B cell (primary cell): ENCODE measurements at regions of chr12 and their contacts with region 1.

Region 1: GRCh38 chr12:96516472-96517430 is 27.4 kb downstream of the CFAP54 start:
- DNase-seq: peak; percentile 87
- ATAC-seq: peak; percentile 65
- H3K4me3 ChIP-seq: peak overlapping the region in 1 of 5 experiments; percentile 22
- H3K4me3 Mint-ChIP-seq: no peak overlapping the region
- H3K27ac ChIP-seq: no peak overlapping the region
- H3K27ac Mint-ChIP-seq: no peak overlapping the region
- H3K4me1 ChIP-seq: peaks cover 14 to 16% of the 10 kb centered on the region in 2 donors
- H3K4me1 Mint-ChIP-seq: peaks cover 21% of the 10 kb centered on the region
- H3K27me3 ChIP-seq: no peaks in the 10 kb centered on the region
- H3K27me3 Mint-ChIP-seq: no peaks in the 10 kb centered on the region
- CTCF ChIP-seq: peak; percentile 84

Region 2: DNA sequence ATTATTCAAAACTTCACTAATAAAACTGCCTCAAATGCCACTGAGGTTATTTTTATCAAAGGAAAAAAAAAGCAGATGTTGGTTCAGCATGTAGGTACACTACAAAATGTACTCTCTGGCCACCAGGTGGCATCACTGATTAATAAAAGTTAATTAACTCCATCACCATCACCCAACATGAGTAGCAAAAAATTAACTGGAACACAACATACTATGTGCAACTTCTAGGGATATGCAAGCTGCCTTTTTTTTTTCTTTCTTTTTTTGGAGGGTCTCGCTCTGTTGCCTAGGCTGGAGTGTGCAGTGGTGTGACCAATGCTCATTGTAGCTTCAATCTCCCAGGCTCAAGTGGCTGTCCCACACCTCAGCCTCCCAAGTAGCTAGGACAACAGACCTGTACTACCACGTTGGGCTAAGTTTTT is 1399.6 kb before region 1 on chr12:
- CTCF ChIA-PET with region 1: interaction called, 9 read pairs
- POLR2A ChIA-PET with region 1: no interaction called
- intact Hi-C with region 1: loop called (anchors 2 kb)
- DNase-seq: peak; percentile 79
- ATAC-seq: peak; percentile 76
- H3K4me3 ChIP-seq: no peak overlapping the region
- H3K4me3 Mint-ChIP-seq: no peak overlapping the region
- H3K27ac ChIP-seq: no peak overlapping the region
- H3K27ac Mint-ChIP-seq: no peak overlapping the region
- H3K4me1 ChIP-seq: no peaks in the 10 kb centered on the region
- H3K4me1 Mint-ChIP-seq: no peaks in the 10 kb centered on the region
- H3K27me3 ChIP-seq: no peaks in the 10 kb centered on the region
- H3K27me3 Mint-ChIP-seq: no peaks in the 10 kb centered on the region
- CTCF ChIP-seq: peak; percentile 81

Region 3: GRCh38 chr12:96061864-96062453 is 454.8 kb before region 1 on chr12:
- CTCF ChIA-PET with region 1: interaction called, 69 read pairs
- POLR2A ChIA-PET with region 1: no interaction called
- intact Hi-C with region 1: loop called (anchors 1 kb)
- DNase-seq: peak; percentile 91
- ATAC-seq: peak; percentile 97
- H3K4me3 ChIP-seq: peak overlapping the region in 1 of 5 experiments; percentile 38
- H3K4me3 Mint-ChIP-seq: peak overlapping the region; percentile 36
- H3K27ac ChIP-seq: peak overlapping the region; percentile 9 to 43
- H3K27ac Mint-ChIP-seq: peak overlapping the region; percentile 89
- H3K4me1 ChIP-seq: peaks cover 21 to 32% of the 10 kb centered on the region in 2 donors
- H3K4me1 Mint-ChIP-seq: peaks cover 25% of the 10 kb centered on the region
- H3K27me3 ChIP-seq: no peaks in the 10 kb centered on the region
- H3K27me3 Mint-ChIP-seq: no peaks in the 10 kb centered on the region
- CTCF ChIP-seq: peak; percentile 84

Region 4: DNA sequence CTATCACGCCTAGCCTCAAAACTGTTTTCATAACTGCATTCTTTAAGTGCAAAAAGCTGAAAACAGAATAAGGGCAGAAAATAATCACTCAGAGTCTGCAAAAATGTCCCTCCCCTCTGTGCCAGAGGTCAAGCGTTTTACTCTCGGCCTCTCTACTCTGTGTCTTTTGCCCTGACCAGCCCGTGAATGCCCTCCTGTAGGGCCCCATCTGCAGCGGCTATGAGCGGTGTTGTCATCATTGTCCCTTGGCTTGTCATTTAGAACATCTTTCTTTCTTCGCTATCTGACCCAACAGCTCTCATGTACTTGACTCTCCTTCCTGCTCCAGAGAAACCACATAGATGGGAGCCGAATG is 300.9 kb before region 1 on chr12:
- CTCF ChIA-PET with region 1: interaction called, 79 read pairs
- POLR2A ChIA-PET with region 1: no interaction called
- intact Hi-C with region 1: loop called (anchors 1 kb)
- DNase-seq: no peak
- ATAC-seq: no peak
- H3K4me3 ChIP-seq: no peak overlapping the region
- H3K4me3 Mint-ChIP-seq: no peak overlapping the region
- H3K27ac ChIP-seq: peak overlapping the region in 1 of 2 donors; percentile 20
- H3K27ac Mint-ChIP-seq: peak overlapping the region; percentile 1
- H3K4me1 ChIP-seq: peaks cover 41 to 45% of the 10 kb centered on the region in 2 donors
- H3K4me1 Mint-ChIP-seq: peaks cover 50% of the 10 kb centered on the region
- H3K27me3 ChIP-seq: no peaks in the 10 kb centered on the region
- H3K27me3 Mint-ChIP-seq: no peaks in the 10 kb centered on the region
- CTCF ChIP-seq: no peak

Region 5: DNA sequence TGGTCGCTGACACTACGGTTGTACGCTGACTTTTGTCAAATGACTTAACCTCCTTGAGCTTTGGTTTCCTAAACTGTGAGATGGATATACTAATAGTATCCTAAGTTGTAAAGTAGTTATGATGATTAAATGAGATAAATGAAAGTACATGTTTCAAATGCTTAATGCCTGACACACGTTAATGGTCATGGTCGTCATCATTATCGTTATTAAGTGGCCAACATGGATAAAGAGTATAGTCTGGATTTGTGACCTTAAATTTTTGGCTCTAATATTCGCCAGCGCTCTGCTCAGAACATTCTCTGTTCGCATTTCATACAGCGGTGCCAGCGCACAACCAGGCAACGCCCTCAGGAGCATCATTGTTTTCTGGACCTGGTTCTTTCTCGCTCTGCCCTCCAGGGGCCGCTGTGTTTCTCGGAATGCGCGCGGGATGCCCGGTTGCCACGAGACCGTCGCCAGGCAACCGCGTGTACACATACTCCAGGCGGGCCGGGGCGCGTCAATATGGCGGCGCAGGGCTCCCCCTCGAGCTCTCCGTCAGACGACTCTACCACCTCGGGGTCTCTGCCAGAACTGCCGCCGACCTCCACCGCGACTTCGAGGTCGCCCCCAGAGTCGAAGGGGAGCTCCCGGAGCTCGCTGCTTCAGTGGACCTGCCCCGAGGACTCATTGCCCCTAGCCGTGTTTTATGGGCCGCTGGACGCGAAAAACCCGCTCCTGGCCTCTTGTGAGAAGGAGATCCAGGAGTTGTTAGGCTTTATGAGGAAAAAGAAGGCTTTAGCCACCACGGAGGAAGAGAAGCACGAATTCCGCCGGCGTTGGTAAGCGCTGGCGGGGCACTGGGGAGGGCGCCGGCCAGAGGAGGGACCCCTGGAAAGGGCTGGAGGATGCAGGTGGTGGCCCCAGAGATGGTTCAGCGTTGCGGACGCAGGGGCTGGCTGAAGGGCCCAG is 27.4 kb before region 1 on chr12 and contains the start of gene CFAP54:
- CTCF ChIA-PET with region 1: interaction called, 55 read pairs
- POLR2A ChIA-PET with region 1: no interaction called
- intact Hi-C with region 1: loop called (anchors 1 kb)
- DNase-seq: peak; percentile 96
- ATAC-seq: peak; percentile 91
- H3K4me3 ChIP-seq: peak within 1 kb of the TSS; percentile 35 to 75 (median 67)
- H3K4me3 Mint-ChIP-seq: peak within 1 kb of the TSS; percentile 90
- H3K27ac ChIP-seq: peak within 1 kb of the TSS in 1 of 2 donors; percentile 69
- H3K27ac Mint-ChIP-seq: peak within 1 kb of the TSS; percentile 86
- H3K4me1 ChIP-seq: peaks cover 8 to 10% of the 10 kb centered on the region in 2 donors
- H3K4me1 Mint-ChIP-seq: peaks cover 16% of the 10 kb centered on the region
- H3K27me3 ChIP-seq: peaks cover 0 to 6% (median 3%) of the 10 kb centered on the region in 4 experiments
- H3K27me3 Mint-ChIP-seq: no peaks in the 10 kb centered on the region
- CTCF ChIP-seq: peak; percentile 89
- total RNA-seq, gene CFAP54: 0.24 and 0.76 TPM in 2 replicates

Region 6: GRCh38 chr12:96501139-96501761 is 15.5 kb before region 1 on chr12:
- CTCF ChIA-PET with region 1: interaction called, 15 read pairs
- POLR2A ChIA-PET with region 1: no interaction called
- intact Hi-C with region 1: no loop called
- DNase-seq: no peak
- ATAC-seq: peak; percentile 70
- H3K4me3 ChIP-seq: peak overlapping the region in 1 of 5 experiments; percentile 3
- H3K4me3 Mint-ChIP-seq: peak overlapping the region; percentile 24
- H3K27ac ChIP-seq: peak overlapping the region; percentile 15 to 38
- H3K27ac Mint-ChIP-seq: peak overlapping the region; percentile 32
- H3K4me1 ChIP-seq: peaks cover 20 to 24% of the 10 kb centered on the region in 2 donors
- H3K4me1 Mint-ChIP-seq: peaks cover 27% of the 10 kb centered on the region
- H3K27me3 ChIP-seq: no peaks in the 10 kb centered on the region
- H3K27me3 Mint-ChIP-seq: no peaks in the 10 kb centered on the region
- CTCF ChIP-seq: no peak

Region 7: DNA sequence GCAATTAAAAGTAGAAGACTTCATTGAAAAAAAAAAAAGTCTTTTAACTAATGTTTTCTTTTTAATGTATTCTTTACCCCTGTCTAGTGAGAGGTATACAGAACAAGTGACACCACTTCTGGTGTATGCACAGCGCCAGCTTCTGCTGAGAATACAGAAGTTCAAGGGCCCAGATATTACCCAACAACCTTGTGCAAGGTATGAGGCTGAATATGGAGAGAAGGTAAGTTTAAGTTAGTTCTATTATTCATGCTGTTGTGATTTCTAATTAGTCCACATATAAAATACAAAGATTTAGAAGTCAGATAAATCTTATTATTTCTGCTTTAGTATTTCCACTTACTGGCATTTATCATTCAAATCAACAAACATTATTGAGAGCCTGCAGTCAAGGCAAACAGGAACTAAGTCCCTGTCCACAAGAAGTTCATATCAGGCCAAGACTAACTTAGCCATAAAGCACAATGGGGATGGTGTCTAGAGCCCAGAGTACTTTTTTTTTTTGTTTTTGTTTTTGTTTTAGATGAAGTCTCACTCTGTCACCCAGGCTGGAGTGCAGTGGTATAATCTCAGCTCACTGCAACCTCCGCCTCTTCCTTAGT is 141.5 kb after region 1 on chr12:
- CTCF ChIA-PET with region 1: no interaction called
- POLR2A ChIA-PET with region 1: no interaction called
- intact Hi-C with region 1: no loop called
- DNase-seq: no peak
- ATAC-seq: no peak
- H3K4me3 ChIP-seq: no peak overlapping the region
- H3K4me3 Mint-ChIP-seq: no peak overlapping the region
- H3K27ac ChIP-seq: no peak overlapping the region
- H3K27ac Mint-ChIP-seq: no peak overlapping the region
- H3K4me1 ChIP-seq: no peaks in the 10 kb centered on the region
- H3K4me1 Mint-ChIP-seq: no peaks in the 10 kb centered on the region
- H3K27me3 ChIP-seq: no peaks in the 10 kb centered on the region
- H3K27me3 Mint-ChIP-seq: peaks cover 13% of the 10 kb centered on the region
- CTCF ChIP-seq: no peak